ENCODE measurements at regions of chr1 and their contacts with region 1.

Region 1: DNA sequence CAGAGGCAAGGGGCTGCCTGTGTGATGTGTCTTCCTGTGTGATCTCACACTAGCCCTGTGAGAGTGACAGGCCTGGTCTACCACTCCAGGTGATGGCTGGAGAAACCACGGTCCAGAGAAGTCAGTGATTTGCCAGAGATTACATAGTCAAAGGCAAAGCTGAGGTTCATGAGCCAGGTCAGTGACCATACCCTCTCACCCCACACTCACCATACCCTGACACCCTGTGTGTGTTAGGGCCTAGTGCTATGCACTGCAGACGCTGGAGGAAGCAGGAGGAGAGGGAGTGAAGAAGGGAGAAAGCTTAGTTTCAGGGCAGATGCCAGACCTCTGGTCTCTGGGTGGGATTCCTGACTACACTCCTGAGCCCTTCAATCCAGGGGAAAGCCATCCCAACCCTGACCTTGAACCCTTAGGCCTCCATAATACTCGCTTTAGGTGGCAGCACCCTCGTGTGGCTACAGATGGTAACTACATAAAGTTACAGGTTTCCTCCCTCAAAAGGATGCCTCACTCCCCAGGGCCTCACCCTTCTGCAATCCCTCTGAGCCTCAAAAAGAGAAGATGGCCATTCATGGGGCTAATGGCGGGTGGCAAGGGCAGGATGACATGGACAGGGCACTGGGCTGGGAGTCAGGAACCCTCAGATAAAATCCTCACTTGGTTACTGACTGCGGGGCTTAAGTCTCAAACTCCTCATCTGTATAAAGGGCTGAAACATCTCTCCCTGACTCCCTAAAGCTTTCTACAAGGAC is 20.8 kb upstream of the SDC3 start:
- DNase-seq: peak; percentile 55
- H3K4me3 ChIP-seq: no peak overlapping the region
- H3K27ac ChIP-seq: no peak overlapping the region
- H3K4me1 ChIP-seq: peaks cover 27% of the 10 kb centered on the region
- H3K27me3 ChIP-seq: no peaks in the 10 kb centered on the region
- CTCF ChIP-seq: peak; percentile 60 to 73

Region 2: GRCh38 chr1:30779294-30780071 is 149.8 kb before region 1 on chr1:
- CTCF ChIA-PET with region 1: no interaction called
- dilution Hi-C with region 1: no loop called
- in situ Hi-C with region 1: no loop called
- intact Hi-C with region 1: loop called (anchors 1 kb)
- DNase-seq: peak; percentile 65
- H3K4me3 ChIP-seq: no peak overlapping the region
- H3K27ac ChIP-seq: no peak overlapping the region
- H3K4me1 ChIP-seq: peaks cover 9% of the 10 kb centered on the region
- H3K27me3 ChIP-seq: no peaks in the 10 kb centered on the region
- CTCF ChIP-seq: peak; percentile 78 to 97

Region 3: GRCh38 chr1:30801771-30802198 is 127.5 kb before region 1 on chr1:
- CTCF ChIA-PET with region 1: no interaction called
- dilution Hi-C with region 1: no loop called
- in situ Hi-C with region 1: no loop called
- intact Hi-C with region 1: loop called (anchors 1 kb)
- DNase-seq: peak; percentile 32
- H3K4me3 ChIP-seq: no peak overlapping the region
- H3K27ac ChIP-seq: no peak overlapping the region
- H3K4me1 ChIP-seq: peaks cover 16% of the 10 kb centered on the region
- H3K27me3 ChIP-seq: no peaks in the 10 kb centered on the region
- CTCF ChIP-seq: peak; percentile 77 to 99

Region 4: DNA sequence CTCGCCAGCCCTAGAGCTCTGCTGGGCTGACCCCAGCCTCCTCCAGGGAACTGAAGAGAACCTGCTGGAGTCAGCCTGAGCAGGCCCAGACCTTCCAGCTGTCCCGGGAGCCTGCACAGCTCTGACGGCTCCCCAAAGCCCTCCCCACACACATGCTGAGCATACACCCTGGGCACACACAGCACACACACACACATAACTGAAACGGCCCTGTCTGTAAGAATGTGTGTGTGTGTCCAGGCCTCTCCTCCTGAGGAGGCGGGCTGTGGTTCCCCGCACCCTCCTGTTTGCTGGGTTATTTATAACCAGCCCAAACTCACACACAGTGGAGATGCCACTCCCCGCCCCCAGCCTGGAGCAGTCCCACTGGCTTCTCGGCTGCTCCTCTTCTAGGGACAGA is 40.9 kb before region 1 on chr1:
- CTCF ChIA-PET with region 1: no interaction called
- dilution Hi-C with region 1: no loop called
- in situ Hi-C with region 1: no loop called
- intact Hi-C with region 1: no loop called
- DNase-seq: no peak
- H3K4me3 ChIP-seq: no peak overlapping the region
- H3K27ac ChIP-seq: no peak overlapping the region
- H3K4me1 ChIP-seq: no peaks in the 10 kb centered on the region
- H3K27me3 ChIP-seq: no peaks in the 10 kb centered on the region
- CTCF ChIP-seq: no peak

Region 5: GRCh38 chr1:31010086-31010989 is 81.0 kb after region 1 on chr1:
- CTCF ChIA-PET with region 1: no interaction called
- dilution Hi-C with region 1: loop called (anchors 5 kb)
- in situ Hi-C with region 1: no loop called
- intact Hi-C with region 1: no loop called
- DNase-seq: peak; percentile 70
- H3K4me3 ChIP-seq: no peak overlapping the region
- H3K27ac ChIP-seq: peak overlapping the region; percentile 16
- H3K4me1 ChIP-seq: peaks cover 82% of the 10 kb centered on the region
- H3K27me3 ChIP-seq: no peaks in the 10 kb centered on the region
- CTCF ChIP-seq: no peak

Region 6: GRCh38 chr1:31306278-31306677 is 377.0 kb after region 1 on chr1:
- CTCF ChIA-PET with region 1: no interaction called
- dilution Hi-C with region 1: no loop called
- in situ Hi-C with region 1: no loop called
- intact Hi-C with region 1: no loop called
- DNase-seq: peak; percentile 89
- H3K4me3 ChIP-seq: no peak overlapping the region
- H3K27ac ChIP-seq: peak overlapping the region; percentile 59
- H3K4me1 ChIP-seq: peaks cover 8% of the 10 kb centered on the region
- H3K27me3 ChIP-seq: no peaks in the 10 kb centered on the region
- CTCF ChIP-seq: no peak

Measured in mammary epithelial cell (primary cell).